ENCODE measurements at regions of chrX and their contacts with region 1.

Region 1: DNA sequence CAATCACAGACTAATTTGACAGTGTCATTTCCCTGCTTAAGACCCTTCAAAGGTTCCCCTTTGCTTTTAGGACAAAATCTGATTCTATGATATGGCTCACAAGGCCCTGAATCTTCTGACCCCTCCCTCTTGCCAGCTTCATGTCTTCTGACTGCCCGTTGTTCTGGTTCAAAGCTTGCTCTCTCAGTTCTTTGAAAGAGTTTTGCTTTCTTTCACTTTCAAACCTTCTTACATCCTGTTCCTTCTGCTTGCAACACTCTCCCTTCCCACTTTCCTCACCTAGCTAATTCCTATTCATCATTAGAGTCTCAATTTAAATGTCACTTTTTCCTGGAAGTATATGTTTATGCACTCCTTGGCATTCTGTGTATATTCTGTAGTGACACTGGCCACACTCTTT is 299.2 kb downstream of the IDS start:
- DNase-seq: no peak
- ATAC-seq: no peak
- H3K4me3 ChIP-seq: no peak overlapping the region
- H3K27ac ChIP-seq: no peak overlapping the region
- H3K4me1 ChIP-seq: no peaks in the 10 kb centered on the region
- H3K27me3 ChIP-seq: peaks cover 0 to 8% (median 0%) of the 10 kb centered on the region in 7 donors
- CTCF ChIP-seq: no peak

Region 2: GRCh38 chrX:148120999-148121623 is 1084.8 kb before region 1 on chrX:
- intact Hi-C with region 1: loop called in 1 of 10 experiments (anchors 5 kb)
- DNase-seq: no peak
- ATAC-seq: no peak
- H3K4me3 ChIP-seq: no peak overlapping the region
- H3K27ac ChIP-seq: no peak overlapping the region
- H3K4me1 ChIP-seq: no peaks in the 10 kb centered on the region
- H3K27me3 ChIP-seq: no peaks in the 10 kb centered on the region
- CTCF ChIP-seq: no peak

Region 3: GRCh38 chrX:148661035-148661434 is 544.9 kb before region 1 on chrX:
- intact Hi-C with region 1: no loop called
- DNase-seq: no peak
- ATAC-seq: no peak
- H3K4me3 ChIP-seq: no peak overlapping the region
- H3K27ac ChIP-seq: no peak overlapping the region
- H3K4me1 ChIP-seq: no peaks in the 10 kb centered on the region
- H3K27me3 ChIP-seq: no peaks in the 10 kb centered on the region
- CTCF ChIP-seq: no peak

Region 4: DNA sequence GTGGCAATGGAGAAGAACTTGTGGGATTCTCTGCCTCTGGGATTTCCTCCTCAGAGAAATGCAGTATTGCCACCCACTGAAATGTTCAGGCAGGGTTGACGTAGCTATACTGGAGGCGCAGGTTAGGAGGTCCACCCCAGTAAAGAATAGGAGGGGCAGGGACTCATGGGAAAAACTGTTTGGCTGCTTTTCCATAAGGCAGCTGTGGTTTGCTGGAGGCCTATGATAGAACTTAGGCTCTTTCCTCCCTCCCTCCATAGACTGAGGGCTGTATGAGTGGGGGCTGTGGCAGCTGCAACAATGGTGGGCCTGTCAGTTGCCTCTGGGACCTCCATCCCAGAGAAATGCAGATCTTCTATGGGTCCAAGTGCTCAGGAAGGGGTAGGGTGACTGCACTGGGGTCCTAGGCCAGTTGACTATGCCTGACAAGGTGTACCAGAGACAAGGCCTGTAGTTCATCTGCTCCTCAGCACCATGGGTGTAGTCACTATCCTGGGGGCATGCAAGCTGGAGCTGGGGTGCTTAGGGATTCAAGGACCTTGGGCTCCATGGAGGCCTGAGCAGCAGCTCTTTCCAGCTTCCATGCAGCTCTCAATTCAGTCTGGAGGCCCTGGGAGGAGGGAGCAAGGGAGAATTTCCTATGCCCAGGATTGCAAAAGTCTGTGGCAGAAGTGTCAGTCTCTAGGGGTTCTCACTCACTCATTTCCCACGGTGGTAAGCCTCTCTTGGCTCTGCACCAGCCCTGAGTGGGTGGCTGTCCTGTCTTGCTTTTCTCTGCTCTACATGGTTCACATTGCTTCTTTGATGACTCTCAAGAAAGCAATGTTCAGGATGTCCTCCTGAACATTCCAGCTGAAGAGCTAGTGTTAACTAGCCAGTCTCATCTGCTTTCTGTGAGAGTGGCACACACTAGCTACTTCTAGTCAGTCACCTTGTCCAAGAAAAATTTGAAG is 53.9 kb before region 1 on chrX:
- intact Hi-C with region 1: no loop called
- DNase-seq: no peak
- ATAC-seq: peak in 3 of 8 donors; percentile 35 to 63 (median 45)
- H3K4me3 ChIP-seq: no peak overlapping the region
- H3K27ac ChIP-seq: no peak overlapping the region
- H3K4me1 ChIP-seq: no peaks in the 10 kb centered on the region
- H3K27me3 ChIP-seq: no peaks in the 10 kb centered on the region
- CTCF ChIP-seq: no peak

Measured in heart right ventricle (tissue), 16 donors.